H1 (cell line): ENCODE measurements at regions of chr5 and their contacts with region 1.

Region 1: GRCh38 chr5:154405078-154405792 is 40.6 kb upstream of the SAP30L start:
- DNase-seq: peak; percentile 60 to 91
- H3K4me3 ChIP-seq: peak overlapping the region in 3 of 4 experiments; percentile 21 to 51 (median 30); a peak in 6 of 8 replicates
- H3K27ac ChIP-seq: no peak overlapping the region
- H3K4me1 ChIP-seq: no peaks in the 10 kb centered on the region
- H3K27me3 ChIP-seq: no peaks in the 10 kb centered on the region; a peak in 1 of 7 replicates
- CTCF ChIP-seq: peak; percentile 86 to 96 (median 93)
- EP300 ChIP-seq: no peak
- POLR2A ChIP-seq: no peak
- RAD21 ChIP-seq: peak; percentile 97 to 100

Region 2: DNA sequence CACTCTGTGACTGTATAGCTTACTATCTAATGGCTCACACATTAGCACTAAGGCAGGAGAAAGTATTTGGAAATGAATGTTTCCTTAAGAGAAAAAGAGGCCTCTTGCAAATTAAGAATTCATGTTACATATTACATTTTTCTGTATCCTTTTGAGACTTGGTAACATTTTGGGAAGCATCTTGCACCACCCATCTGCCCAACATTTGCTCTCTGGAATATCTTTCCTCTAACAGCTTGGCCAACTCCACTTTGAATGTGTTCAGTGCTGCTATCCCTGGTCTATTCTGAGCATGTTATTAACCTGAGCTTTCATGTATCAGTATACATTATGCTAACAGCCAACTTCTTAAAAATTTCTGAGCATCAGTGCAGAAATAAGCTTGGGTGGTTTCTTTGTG is 339.3 kb before region 1 on chr5:
- CTCF ChIA-PET with region 1: interaction called, 61 read pairs
- POLR2A ChIA-PET with region 1: no interaction called
- DNase-seq: no peak
- H3K4me3 ChIP-seq: no peak overlapping the region
- H3K27ac ChIP-seq: no peak overlapping the region
- H3K4me1 ChIP-seq: no peaks in the 10 kb centered on the region
- H3K27me3 ChIP-seq: no peaks in the 10 kb centered on the region; a peak in 1 of 7 replicates
- CTCF ChIP-seq: no peak
- EP300 ChIP-seq: no peak
- POLR2A ChIP-seq: no peak
- RAD21 ChIP-seq: no peak

Region 3: DNA sequence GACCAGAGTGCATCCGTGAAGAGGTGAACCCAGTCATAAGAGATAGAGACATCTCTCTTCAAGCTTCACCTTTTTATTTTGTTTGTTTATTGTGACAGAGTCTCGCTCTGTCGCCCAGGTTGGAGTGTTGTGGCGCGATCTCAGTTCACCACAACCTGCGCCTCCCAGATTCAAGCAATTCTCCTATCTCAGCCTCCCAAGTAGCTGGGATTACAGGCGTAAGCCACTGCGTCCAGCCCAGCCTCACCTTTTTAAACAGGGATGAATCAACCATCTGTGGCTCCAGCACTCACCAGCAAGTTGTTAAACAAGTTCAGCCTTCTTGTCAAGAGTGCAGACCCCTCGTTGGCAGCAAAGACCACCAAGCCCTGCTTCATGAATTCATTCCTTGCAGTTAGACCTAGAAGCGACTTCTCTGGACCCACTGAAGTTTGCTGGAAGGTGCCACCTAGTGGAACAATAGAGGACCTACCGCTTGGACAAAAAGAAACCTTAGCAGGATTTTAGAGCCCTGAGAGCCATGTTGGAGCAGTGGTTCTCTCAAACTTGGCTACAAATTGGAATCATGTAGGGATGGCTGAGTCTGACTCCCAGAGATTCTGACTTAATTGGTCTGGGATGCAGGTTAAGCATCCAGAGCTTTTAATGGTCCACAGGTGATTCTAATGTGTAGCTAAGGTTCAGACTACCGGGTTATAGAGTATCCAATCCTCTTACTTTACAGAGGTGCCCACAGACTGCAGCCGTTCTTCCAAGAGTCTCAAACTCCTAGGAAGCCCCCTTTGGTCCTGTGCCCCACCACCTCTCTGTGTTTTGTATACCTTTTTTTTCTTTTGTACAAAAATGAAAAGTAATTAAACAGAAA is 225.2 kb before region 1 on chr5:
- CTCF ChIA-PET with region 1: interaction called, 43 read pairs
- POLR2A ChIA-PET with region 1: no interaction called
- DNase-seq: no peak
- H3K4me3 ChIP-seq: no peak overlapping the region
- H3K27ac ChIP-seq: no peak overlapping the region
- H3K4me1 ChIP-seq: no peaks in the 10 kb centered on the region; a peak in 1 of 7 replicates
- H3K27me3 ChIP-seq: peaks cover 0 to 3% (median 0%) of the 10 kb centered on the region in 4 experiments; a peak in 1 of 7 replicates
- CTCF ChIP-seq: peak; percentile 26 to 84 (median 84)
- EP300 ChIP-seq: no peak
- POLR2A ChIP-seq: no peak
- RAD21 ChIP-seq: peak; percentile 85 to 90

Region 4: GRCh38 chr5:154196955-154197652 is 208.1 kb before region 1 on chr5:
- CTCF ChIA-PET with region 1: interaction called, 57 read pairs
- POLR2A ChIA-PET with region 1: interaction called, 4 read pairs
- DNase-seq: no peak
- H3K4me3 ChIP-seq: no peak overlapping the region
- H3K27ac ChIP-seq: no peak overlapping the region
- H3K4me1 ChIP-seq: peaks cover 0 to 19% (median 12%) of the 10 kb centered on the region in 4 experiments; a peak in 5 of 7 replicates
- H3K27me3 ChIP-seq: peaks cover 1 to 8% (median 5%) of the 10 kb centered on the region in 4 experiments; a peak in 5 of 7 replicates
- CTCF ChIP-seq: peak in 1 of 3 experiments; percentile 27; a peak in 1 of 4 replicates
- EP300 ChIP-seq: no peak
- POLR2A ChIP-seq: no peak
- RAD21 ChIP-seq: peak; percentile 26 to 40; a peak in 3 of 4 replicates

Region 5: DNA sequence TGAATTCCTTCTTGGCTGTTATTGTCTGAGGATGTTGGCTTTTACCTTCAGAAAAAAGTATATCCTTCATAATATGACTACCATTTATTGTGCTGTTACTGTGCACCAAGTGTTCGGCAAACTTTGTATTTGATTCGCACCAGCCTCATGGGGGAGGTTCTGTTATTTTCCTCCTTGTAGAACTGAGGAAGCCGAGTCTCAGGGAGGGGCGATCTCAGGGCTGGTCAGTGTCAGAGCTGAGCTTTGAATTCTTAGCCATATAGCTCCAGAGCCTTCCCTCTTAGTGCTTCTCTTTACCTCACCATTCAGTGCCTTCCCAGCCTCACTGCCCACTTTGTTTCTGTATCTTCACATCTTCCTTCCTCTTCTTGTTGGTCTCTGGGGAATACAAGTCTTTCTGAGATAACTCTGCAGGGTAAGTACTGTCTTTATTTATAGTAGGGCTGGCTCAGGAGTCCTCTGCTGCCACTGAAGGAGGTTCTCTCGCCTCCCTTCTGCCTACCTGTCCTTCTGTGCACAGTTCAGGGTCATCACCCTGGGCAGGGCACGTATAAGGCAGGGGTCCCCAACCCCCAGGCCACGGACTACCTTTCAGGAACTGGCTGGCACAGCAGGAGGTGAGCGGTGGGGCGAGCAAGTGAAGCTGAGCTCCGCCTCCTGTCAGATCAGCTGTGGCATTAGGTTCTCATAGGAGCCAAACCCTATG is 166.3 kb before region 1 on chr5:
- CTCF ChIA-PET with region 1: interaction called, 18 read pairs
- POLR2A ChIA-PET with region 1: no interaction called
- DNase-seq: no peak
- H3K4me3 ChIP-seq: no peak overlapping the region
- H3K27ac ChIP-seq: no peak overlapping the region
- H3K4me1 ChIP-seq: peaks cover 2 to 7% (median 5%) of the 10 kb centered on the region in 4 experiments; a peak in 5 of 7 replicates
- H3K27me3 ChIP-seq: no peaks in the 10 kb centered on the region
- CTCF ChIP-seq: no peak
- EP300 ChIP-seq: no peak
- POLR2A ChIP-seq: no peak
- RAD21 ChIP-seq: no peak

Region 6: DNA sequence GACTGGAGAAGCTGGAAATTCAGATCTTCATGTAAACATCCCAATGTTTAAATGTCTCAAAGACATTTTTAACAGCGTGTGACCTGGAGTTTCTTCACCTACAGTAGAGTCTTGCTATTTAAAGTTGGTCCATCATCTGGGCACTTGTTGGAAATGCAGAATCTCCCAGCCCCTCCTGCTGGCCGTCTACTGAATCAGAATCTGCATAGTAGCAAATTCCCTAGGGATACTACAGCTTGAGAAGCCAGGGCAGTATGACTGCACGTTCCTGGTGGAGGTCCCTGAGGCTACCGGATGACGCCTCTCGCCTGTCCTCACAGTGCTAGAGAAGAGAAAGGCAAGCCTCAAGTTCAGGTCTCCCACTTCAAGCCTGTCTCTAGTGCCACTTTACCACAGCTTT is 56.3 kb after region 1 on chr5:
- CTCF ChIA-PET with region 1: interaction called, 14 read pairs
- POLR2A ChIA-PET with region 1: no interaction called
- DNase-seq: no peak
- H3K4me3 ChIP-seq: no peak overlapping the region
- H3K27ac ChIP-seq: no peak overlapping the region
- H3K4me1 ChIP-seq: peaks cover 0 to 3% (median 0%) of the 10 kb centered on the region in 4 experiments; a peak in 3 of 7 replicates
- H3K27me3 ChIP-seq: peaks cover 0 to 3% (median under 1%) of the 10 kb centered on the region in 4 experiments; a peak in 1 of 7 replicates
- CTCF ChIP-seq: peak; percentile 14 to 53 (median 42); a peak in 3 of 4 replicates
- EP300 ChIP-seq: no peak
- POLR2A ChIP-seq: no peak
- RAD21 ChIP-seq: peak; percentile 52 to 60

Region 7: DNA sequence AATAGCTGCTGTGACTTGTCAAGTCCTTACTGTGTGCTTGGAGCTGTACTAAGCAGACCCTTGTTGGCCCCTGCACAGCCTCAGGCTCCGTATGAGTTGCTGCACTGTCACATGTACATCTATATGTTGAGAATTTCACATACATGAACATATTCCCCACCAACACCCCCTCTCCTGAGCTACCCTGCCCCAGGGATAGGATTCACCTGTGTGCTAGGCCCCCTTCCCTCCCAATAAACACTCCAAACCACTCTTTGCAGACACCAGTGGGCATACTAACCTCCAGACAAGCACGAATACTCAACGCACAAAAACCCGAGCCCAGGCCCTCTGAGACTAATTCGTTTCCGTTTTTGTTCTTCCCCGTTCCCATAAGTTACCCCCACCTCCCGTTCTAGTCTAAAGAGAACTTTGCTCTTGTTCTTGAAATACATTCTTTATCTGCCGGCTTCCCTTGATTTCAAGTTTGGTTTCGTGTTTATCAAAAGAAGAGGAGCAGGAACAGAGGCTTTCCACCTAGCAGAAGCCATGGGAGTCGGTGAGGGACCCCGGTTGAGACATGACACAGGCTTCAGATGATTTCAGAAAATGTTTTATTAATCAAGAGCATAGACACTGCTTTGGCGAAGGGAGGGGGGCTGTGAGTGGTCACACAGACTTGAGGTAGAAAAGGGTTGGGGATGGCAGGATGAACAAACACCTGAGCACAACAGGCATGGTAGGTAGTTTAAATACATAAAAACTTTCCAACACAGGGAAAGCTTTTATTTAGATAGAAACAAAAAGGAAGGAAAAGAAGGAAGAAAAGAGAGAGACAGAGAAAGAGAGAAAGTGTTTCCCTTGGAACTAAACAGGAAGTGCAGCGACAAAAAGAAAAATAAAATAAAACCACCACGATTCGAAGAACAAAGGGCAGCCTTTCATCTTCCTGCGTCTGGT is 69.4 kb after region 1 on chr5:
- CTCF ChIA-PET with region 1: no interaction called
- POLR2A ChIA-PET with region 1: no interaction called
- DNase-seq: no peak
- H3K4me3 ChIP-seq: peak overlapping the region in 1 of 4 experiments; percentile 58; a peak in 3 of 8 replicates
- H3K27ac ChIP-seq: no peak overlapping the region
- H3K4me1 ChIP-seq: peaks cover 18 to 41% (median 24%) of the 10 kb centered on the region in 4 experiments
- H3K27me3 ChIP-seq: peaks cover 90 to 100% (median 95%) of the 10 kb centered on the region in 4 experiments
- CTCF ChIP-seq: no peak
- EP300 ChIP-seq: no peak
- POLR2A ChIP-seq: no peak
- RAD21 ChIP-seq: no peak

Region 8: DNA sequence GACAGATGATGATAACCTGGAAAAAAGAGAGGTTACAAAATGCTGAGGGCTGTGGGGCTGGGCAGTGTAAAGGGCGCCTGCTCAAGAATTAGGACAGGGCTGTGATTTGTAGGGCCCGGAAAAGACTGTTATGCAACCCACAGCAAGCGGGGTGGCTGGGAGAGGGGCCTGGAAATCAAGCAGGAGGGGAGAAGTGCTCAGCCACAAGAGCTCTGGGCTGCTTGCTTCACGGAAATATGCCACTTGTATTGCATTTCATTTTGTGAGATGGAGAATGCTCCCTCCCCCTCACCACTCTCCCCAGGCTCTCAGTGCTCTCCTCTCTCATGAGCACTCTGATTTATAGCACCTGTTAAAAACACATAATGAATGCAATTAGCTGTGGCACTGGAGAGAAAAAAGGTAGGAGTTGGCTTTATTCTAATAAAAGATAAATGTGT is 81.2 kb after region 1 on chr5:
- CTCF ChIA-PET with region 1: no interaction called
- POLR2A ChIA-PET with region 1: no interaction called
- DNase-seq: no peak
- H3K4me3 ChIP-seq: peak overlapping the region in 1 of 4 experiments; percentile 20; a peak in 1 of 8 replicates
- H3K27ac ChIP-seq: no peak overlapping the region
- H3K4me1 ChIP-seq: peaks cover 17 to 37% (median 23%) of the 10 kb centered on the region in 4 experiments
- H3K27me3 ChIP-seq: peaks cover 54 to 66% (median 63%) of the 10 kb centered on the region in 4 experiments
- CTCF ChIP-seq: no peak
- EP300 ChIP-seq: no peak
- POLR2A ChIP-seq: no peak
- RAD21 ChIP-seq: peak in 1 of 2 experiments; percentile 2; a peak in 1 of 4 replicates